Esophagus muscularis mucosa (tissue), 4 donors: ENCODE measurements at regions of chr7 and their contacts with region 1.

Region 1: GRCh38 chr7:110454713-110455112 is 636.2 kb upstream of the LRRN3 start:
- DNase-seq: no peak
- H3K4me3 ChIP-seq: no peak overlapping the region
- H3K27ac ChIP-seq: no peak overlapping the region
- H3K4me1 ChIP-seq: no peaks in the 10 kb centered on the region
- H3K27me3 ChIP-seq: no peaks in the 10 kb centered on the region
- CTCF ChIP-seq: no peak
- EP300 ChIP-seq: no peak
- POLR2A ChIP-seq: no peak

Region 2: DNA sequence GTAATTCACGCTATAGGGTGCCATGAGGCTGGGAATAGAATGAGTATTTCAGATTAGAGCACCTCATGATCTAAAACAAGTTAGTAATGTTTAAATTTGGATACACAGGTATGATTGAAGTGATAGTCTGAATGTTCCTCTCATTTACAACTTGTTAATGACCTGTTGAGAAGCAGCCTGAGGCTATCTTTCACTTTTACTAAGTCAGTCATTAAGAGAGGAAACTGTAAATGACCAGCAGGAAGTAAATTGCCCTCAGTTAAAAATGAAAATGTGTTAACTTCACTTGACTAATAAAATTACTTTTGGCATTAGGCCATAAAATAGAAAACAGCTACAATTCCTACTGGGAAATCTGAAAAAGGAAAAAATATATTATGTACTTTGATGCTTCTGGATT is 843.1 kb before region 1 on chr7:
- intact Hi-C with region 1: no loop called
- DNase-seq: no peak
- H3K4me3 ChIP-seq: no peak overlapping the region
- H3K27ac ChIP-seq: no peak overlapping the region
- H3K4me1 ChIP-seq: no peaks in the 10 kb centered on the region
- H3K27me3 ChIP-seq: no peaks in the 10 kb centered on the region
- CTCF ChIP-seq: no peak
- EP300 ChIP-seq: no peak
- POLR2A ChIP-seq: no peak

Region 3: GRCh38 chr7:110502888-110503465 is 48.3 kb after region 1 on chr7:
- intact Hi-C with region 1: loop called (anchors 10 kb)
- DNase-seq: no peak
- H3K4me3 ChIP-seq: no peak overlapping the region
- H3K27ac ChIP-seq: no peak overlapping the region
- H3K4me1 ChIP-seq: no peaks in the 10 kb centered on the region
- H3K27me3 ChIP-seq: no peaks in the 10 kb centered on the region
- CTCF ChIP-seq: no peak
- EP300 ChIP-seq: no peak
- POLR2A ChIP-seq: no peak